Naive thymus-derived CD4-positive, alpha-beta T cell (primary cell): ENCODE measurements at regions of chr12 and their contacts with region 1.

Region 1: DNA sequence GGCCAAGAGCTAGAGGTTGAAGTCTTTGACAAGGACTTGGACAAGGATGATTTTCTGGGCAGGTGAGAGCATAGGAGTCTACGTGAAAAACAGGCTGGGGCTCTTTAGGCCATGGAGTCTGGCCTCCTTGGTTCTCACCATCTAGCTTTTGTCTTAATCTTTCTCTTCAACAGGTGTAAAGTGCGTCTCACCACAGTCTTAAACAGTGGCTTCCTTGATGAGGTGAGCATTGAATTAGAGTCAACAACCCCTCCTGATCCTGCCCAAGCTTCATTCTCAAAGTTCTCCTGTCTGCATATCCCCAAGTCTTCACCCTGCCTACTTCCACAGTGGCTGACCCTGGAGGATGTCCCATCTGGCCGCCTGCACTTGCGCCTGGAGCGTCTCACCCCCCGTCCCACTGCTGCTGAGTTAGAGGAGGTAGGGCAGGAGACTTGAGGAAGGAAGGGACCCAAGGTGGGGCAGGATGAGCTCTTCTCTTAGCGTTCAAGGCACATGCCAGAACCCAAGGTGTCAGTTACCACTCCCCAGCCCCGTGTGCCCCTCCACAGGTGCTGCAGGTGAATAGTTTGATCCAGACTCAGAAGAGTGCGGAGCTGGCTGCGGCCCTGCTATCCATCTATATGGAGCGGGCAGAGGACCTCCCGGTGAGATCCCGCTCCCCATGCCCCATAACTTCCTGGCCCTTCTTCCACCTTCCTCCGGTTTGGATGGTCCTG is 9.9 kb downstream of the ESYT1 start:
- DNase-seq: peak in 4 of 9 donors; percentile 18 to 38 (median 26)
- ATAC-seq: peak; percentile 52
- H3K4me3 ChIP-seq: no peak overlapping the region
- H3K4me3 Mint-ChIP-seq: peak overlapping the region; percentile 31 to 82 (median 70)
- H3K27ac ChIP-seq: peak overlapping the region; percentile 62
- H3K27ac Mint-ChIP-seq: peak overlapping the region; percentile 67 to 92 (median 87)
- H3K4me1 ChIP-seq: peaks cover 5 to 45% of the 10 kb centered on the region in 2 donors
- H3K4me1 Mint-ChIP-seq: peaks cover 49 to 75% (median 61%) of the 10 kb centered on the region in 7 donors
- H3K27me3 ChIP-seq: no peaks in the 10 kb centered on the region
- H3K27me3 Mint-ChIP-seq: no peaks in the 10 kb centered on the region

Region 2: DNA sequence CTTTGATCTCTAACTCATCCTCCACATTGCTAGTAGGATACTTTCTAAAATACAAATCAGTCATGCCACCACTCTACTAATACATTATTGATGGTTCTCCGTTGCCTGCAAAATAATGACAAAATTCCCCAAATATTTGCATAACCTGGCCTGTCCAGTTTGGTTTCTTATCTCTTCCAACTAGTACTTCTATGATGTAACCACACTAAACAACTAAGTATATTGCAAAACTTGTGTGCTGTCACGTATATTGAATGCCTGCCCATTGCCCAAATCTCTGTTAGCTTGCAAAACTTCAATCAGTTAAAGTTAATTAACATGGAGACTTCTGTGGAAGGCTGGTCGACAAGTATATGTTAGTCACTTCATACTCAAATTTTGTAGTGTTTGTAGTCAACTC is 887.1 kb before region 1 on chr12:
- CTCF ChIA-PET with region 1: no interaction called
- POLR2A ChIA-PET with region 1: no interaction called
- intact Hi-C with region 1: no loop called
- DNase-seq: no peak
- ATAC-seq: no peak
- H3K4me3 ChIP-seq: no peak overlapping the region
- H3K4me3 Mint-ChIP-seq: no peak overlapping the region
- H3K27ac ChIP-seq: no peak overlapping the region
- H3K27ac Mint-ChIP-seq: no peak overlapping the region
- H3K4me1 ChIP-seq: no peaks in the 10 kb centered on the region
- H3K4me1 Mint-ChIP-seq: no peaks in the 10 kb centered on the region
- H3K27me3 ChIP-seq: peaks cover 0 to 5% of the 10 kb centered on the region in 2 donors
- H3K27me3 Mint-ChIP-seq: peaks cover 23 to 33% (median 27%) of the 10 kb centered on the region in 5 donors

Region 3: GRCh38 chr12:56029666-56030293 is 108.2 kb before region 1 on chr12:
- CTCF ChIA-PET with region 1: no interaction called
- POLR2A ChIA-PET with region 1: no interaction called
- intact Hi-C with region 1: no loop called
- DNase-seq: peak in 8 of 9 donors; percentile 24 to 59 (median 46)
- ATAC-seq: peak; percentile 71
- H3K4me3 ChIP-seq: no peak overlapping the region
- H3K4me3 Mint-ChIP-seq: peak overlapping the region in 1 of 10 donors; percentile 1
- H3K27ac ChIP-seq: no peak overlapping the region
- H3K27ac Mint-ChIP-seq: peak overlapping the region in 4 of 9 donors; percentile 3 to 74 (median 32)
- H3K4me1 ChIP-seq: peaks cover 0 to 7% of the 10 kb centered on the region in 2 donors
- H3K4me1 Mint-ChIP-seq: peaks cover 9 to 54% (median 20%) of the 10 kb centered on the region in 7 donors
- H3K27me3 ChIP-seq: no peaks in the 10 kb centered on the region
- H3K27me3 Mint-ChIP-seq: no peaks in the 10 kb centered on the region

Region 4: GRCh38 chr12:56152318-56153033 is 14.5 kb after region 1 on chr12 and contains the start of gene MYL6B:
- CTCF ChIA-PET with region 1: interaction called, 4 read pairs
- POLR2A ChIA-PET with region 1: interaction called, 161 read pairs
- intact Hi-C with region 1: loop called in 1 of 2 experiments (anchors 1 kb)
- DNase-seq: peak; percentile 79 to 94 (median 87)
- ATAC-seq: peak; percentile 98
- H3K4me3 ChIP-seq: peak within 1 kb of the TSS; percentile 86
- H3K4me3 Mint-ChIP-seq: peak within 1 kb of the TSS; percentile 80 to 96 (median 92)
- H3K27ac ChIP-seq: peak within 1 kb of the TSS; percentile 80
- H3K27ac Mint-ChIP-seq: peak within 1 kb of the TSS; percentile 84 to 99 (median 97)
- H3K4me1 ChIP-seq: peaks cover 22 to 25% of the 10 kb centered on the region in 2 donors
- H3K4me1 Mint-ChIP-seq: peaks cover 17 to 55% (median 39%) of the 10 kb centered on the region in 7 donors
- H3K27me3 ChIP-seq: no peaks in the 10 kb centered on the region
- H3K27me3 Mint-ChIP-seq: no peaks in the 10 kb centered on the region
- total RNA-seq, gene MYL6B: 3.7 to 60.3 (median 8.9) TPM

Region 5: GRCh38 chr12:56158029-56158925 is 20.3 kb after region 1 on chr12 and contains the start of gene MYL6:
- CTCF ChIA-PET with region 1: no interaction called
- POLR2A ChIA-PET with region 1: interaction called, 161 read pairs
- intact Hi-C with region 1: loop called in 1 of 2 experiments (anchors 1 kb)
- DNase-seq: peak; percentile 58 to 97 (median 89)
- ATAC-seq: peak; percentile 91
- H3K4me3 ChIP-seq: peak within 1 kb of the TSS; percentile 89
- H3K4me3 Mint-ChIP-seq: peak within 1 kb of the TSS; percentile 94 to 99 (median 96)
- H3K27ac ChIP-seq: peak within 1 kb of the TSS; percentile 98
- H3K27ac Mint-ChIP-seq: peak within 1 kb of the TSS; percentile 88 to 99 (median 97)
- H3K4me1 ChIP-seq: peaks cover 24 to 26% of the 10 kb centered on the region in 2 donors
- H3K4me1 Mint-ChIP-seq: peaks cover 31 to 59% (median 54%) of the 10 kb centered on the region in 7 donors
- H3K27me3 ChIP-seq: no peaks in the 10 kb centered on the region
- H3K27me3 Mint-ChIP-seq: no peaks in the 10 kb centered on the region
- total RNA-seq, gene MYL6: 428 to 1,509 (median 467) TPM